Activated CD8-positive, alpha-beta T cell treated with anti-CD3 and anti-CD28 coated beads, Interleukin-2, amount 10 ng/mL, durations not matched to agents 7 days and 5 days (primary cell): ENCODE measurements at regions of chr6 and their contacts with region 1.

Region 1: GRCh38 chr6:169751242-169752073 is at the starts of genes DYNLT2 and ERMARD:
- DNase-seq: peak; percentile 95
- ATAC-seq: peak; percentile 98
- H3K4me3 Mint-ChIP-seq: peak within 1 kb of the TSS; percentile 100
- H3K27ac Mint-ChIP-seq: peak within 1 kb of the TSS; percentile 100
- H3K4me1 Mint-ChIP-seq: peaks cover 26% of the 10 kb centered on the region
- H3K27me3 Mint-ChIP-seq: peaks cover 3% of the 10 kb centered on the region
- total RNA-seq, gene DYNLT2: 2.1 to 2.6 TPM
- total RNA-seq, gene ERMARD: 28.7 to 33.0 TPM

Region 2: DNA sequence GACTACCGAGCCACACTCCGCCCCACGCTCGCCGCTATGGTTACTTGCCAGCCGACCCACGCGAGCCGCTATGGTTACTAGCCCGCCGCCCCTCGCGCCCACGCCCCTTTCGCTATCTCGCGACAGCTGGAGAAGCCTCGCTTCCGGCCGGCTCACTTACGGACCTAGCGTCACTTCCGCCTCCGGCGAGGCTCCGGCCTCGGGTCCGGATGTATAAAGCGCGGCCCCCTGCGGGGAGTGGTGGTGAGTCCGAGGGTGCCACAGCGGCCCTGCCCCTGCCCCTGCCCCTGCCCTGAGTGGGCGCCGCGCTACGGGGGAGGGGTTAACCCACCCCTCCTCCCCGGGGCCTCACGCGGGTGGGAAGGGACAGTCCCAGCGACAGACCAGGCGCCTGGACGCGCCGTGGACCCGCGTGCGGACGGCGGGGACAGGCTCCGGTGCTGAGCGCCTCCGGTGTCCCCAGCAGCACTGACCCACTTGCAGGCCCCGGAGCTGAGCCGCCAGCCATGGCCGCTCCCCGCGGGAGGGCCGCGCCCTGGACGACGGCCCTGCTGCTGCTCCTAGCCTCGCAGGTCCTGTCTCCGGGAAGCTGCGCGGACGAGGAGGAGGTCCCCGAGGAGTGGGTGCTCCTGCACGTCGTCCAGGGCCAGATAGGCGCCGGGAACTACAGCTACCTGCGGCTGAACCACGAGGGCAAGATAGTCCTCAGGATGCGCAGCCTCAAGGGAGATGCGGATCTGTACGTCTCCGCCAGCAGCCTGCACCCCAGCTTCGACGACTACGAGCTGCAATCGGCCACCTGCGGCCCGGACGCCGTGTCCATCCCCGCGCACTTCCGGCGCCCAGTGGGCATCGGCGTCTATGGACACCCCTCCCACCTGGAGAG is 49.3 kb before region 1 on chr6 and contains the starts of genes C6orf120 and WDR27:
- CTCF ChIA-PET with region 1: interaction called, 5 read pairs
- POLR2A ChIA-PET with region 1: interaction called, 39 read pairs
- DNase-seq: peak; percentile 97
- ATAC-seq: peak; percentile 91
- H3K4me3 Mint-ChIP-seq: peak within 1 kb of the TSS; percentile 90
- H3K27ac Mint-ChIP-seq: peak within 1 kb of the TSS; percentile 92
- H3K4me1 Mint-ChIP-seq: peaks cover 52% of the 10 kb centered on the region
- H3K27me3 Mint-ChIP-seq: no peaks in the 10 kb centered on the region
- total RNA-seq, gene C6orf120: 17.4 to 18.3 TPM
- total RNA-seq, gene WDR27: 22.9 to 25.3 TPM

Region 3: GRCh38 chr6:169723200-169723909 is 28.1 kb before region 1 on chr6:
- CTCF ChIA-PET with region 1: interaction called, 3 read pairs
- POLR2A ChIA-PET with region 1: interaction called, 19 read pairs
- DNase-seq: peak; percentile 66
- ATAC-seq: peak; percentile 50
- H3K4me3 Mint-ChIP-seq: peak overlapping the region; percentile 86
- H3K27ac Mint-ChIP-seq: peak overlapping the region; percentile 93
- H3K4me1 Mint-ChIP-seq: peaks cover 39% of the 10 kb centered on the region
- H3K27me3 Mint-ChIP-seq: peaks cover 6% of the 10 kb centered on the region